ENCODE measurements at regions of chr3 and their contacts with region 1.

Region 1: DNA sequence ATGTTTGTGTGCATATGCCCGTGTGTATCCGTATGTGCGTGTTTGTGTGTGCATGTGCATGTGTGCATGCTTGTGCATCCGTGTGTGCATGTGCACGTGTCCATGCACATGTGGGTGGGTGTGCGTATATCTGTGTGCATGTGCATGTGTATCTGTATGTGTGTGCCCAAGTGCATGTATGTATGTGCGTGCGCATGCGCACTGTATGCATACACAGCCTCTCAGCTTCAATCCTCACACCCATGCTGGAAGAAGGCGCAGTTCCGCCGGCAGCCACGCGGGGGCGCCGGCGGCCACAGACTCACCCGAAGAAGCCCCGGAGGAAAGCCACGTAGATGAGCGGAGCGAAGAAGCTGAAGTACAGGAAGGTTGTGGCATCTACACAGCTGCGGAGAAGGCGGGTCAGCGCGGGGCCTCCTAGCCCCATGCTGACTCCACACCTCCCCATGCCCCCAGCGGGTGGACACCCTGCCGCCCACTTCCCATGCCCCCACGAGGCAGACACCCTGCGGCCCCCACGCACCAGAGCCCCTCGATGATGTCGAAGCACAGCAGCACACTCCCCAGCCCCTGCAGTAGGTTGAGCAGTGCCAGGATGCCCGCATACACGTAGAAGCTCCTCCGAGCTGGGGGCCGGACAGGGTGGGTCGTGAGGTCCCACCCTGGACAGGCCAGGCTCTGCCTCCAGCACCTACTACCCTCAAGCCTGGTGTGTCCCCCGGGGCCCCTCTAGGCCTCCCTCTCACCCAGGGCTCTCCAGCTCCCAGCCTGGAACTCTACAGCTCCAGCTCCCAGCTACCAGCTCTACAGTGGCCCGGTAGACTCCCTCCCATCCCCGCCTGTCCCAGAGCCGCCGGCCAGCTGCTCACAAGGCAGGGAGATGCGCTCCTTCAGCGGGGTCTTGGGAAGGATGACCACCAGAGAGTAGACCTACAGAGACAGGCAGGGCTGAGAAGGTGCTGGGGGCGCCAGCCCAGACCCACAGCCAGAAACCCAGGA is 15.4 kb downstream of the TPRA1 start:
- DNase-seq: peak; percentile 94
- H3K27ac ChIP-seq: peak overlapping the region; percentile 59
- CTCF ChIP-seq: peak; percentile 97

Region 2: DNA sequence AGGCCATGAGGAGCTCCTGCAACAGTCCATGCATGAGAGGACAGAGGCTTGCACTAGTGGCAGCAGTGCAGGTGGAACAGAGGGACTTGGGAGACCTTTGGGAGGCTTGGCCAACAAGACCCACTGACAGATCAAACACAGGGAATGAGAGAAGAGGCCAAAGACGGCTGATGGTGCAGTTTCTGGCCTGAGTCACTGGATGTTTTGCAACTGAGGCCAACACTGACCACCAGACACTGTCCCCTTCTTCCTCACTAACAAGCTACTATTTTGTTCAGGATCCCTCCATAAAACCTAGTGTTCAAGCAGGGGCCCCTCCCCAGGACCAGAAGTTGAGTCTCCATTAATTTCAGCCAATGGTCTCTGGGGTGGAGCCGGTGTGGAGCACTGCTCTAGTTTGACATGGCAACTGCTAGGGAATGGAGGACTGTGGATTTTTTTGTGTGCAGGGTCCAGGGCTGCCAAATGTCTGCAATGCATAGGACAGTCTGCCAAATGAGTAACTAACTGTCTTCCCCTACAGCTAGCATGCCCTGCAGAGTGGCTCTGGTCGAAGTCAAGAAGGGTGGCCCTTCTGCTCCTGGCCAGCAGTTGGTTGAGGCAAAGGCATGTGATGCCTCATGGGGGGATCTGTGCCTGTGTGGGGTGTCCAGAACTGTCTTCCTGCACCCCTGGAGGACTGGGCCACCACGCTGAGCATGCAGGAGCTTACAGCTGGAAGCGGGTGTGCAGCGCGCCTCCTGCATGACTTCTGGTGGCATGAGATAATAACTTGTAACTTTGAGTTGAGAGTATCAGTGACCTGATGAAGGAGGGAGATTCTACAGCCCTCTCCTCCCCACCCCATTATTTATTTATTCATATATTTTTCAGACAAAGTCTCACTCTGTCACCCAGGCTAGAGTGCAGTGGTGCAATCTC is 10.6 kb after region 1 on chr3:
- CTCF ChIA-PET with region 1: interaction called, 28 read pairs
- POLR2A ChIA-PET with region 1: interaction called, 4 read pairs
- DNase-seq: no peak
- H3K27ac ChIP-seq: peak overlapping the region; percentile 29; the same call in 1 of the 2 replicates
- CTCF ChIP-seq: no peak

Region 3: DNA sequence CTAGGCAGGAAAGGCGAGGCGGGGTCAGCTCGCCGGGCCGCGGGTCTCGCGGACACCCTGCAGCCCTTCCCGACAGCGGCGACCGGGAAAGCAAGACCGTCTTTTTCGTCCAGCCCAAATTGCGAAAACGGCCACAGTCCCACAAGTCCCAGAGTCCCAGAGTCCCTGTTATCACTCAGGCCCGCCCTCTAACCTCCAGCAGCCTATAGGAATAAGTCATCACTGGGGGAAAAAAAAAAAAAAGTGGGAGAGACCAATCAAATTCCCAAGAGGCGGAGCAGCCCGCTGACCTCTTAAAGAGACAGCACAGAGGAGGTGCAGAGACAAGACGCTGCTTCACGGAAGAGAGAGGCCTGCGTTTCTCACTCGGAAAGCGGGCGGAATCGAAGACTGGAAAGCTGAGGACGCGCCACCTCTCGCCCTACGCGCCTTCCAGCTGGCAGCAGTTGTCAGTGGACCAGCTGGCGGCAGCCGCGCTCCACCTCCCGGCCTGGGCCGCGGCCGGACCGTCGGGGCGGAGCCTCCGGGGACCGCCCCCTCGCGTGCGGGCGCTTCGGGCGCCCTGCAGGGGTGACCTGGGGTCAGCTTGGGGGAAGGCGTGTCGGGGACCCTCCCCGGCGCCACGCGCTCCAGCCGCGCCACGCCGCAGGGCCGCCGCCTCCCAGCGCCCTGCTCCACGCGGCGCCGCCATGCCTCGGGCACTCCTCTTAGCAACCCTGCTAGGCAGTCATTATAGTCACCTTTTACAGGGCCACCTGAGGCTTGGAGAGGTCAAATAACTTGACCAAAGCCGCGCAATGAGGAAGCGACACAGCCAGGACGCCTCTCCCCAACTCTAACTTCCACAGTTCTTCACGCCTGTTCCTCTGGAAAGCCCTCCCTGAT is 15.7 kb after region 1 on chr3 and contains the start of gene TPRA1:
- CTCF ChIA-PET with region 1: interaction called, 28 read pairs
- POLR2A ChIA-PET with region 1: interaction called, 4 read pairs
- DNase-seq: peak; percentile 97
- H3K27ac ChIP-seq: peak within 1 kb of the TSS; percentile 97
- CTCF ChIP-seq: peak; percentile 55

Region 4: GRCh38 chr3:127598841-127599570 is 23.8 kb after region 1 on chr3:
- CTCF ChIA-PET with region 1: interaction called, 10 read pairs
- POLR2A ChIA-PET with region 1: no interaction called
- DNase-seq: peak; percentile 30
- H3K27ac ChIP-seq: peak overlapping the region; percentile 80
- CTCF ChIP-seq: no peak

Region 5: DNA sequence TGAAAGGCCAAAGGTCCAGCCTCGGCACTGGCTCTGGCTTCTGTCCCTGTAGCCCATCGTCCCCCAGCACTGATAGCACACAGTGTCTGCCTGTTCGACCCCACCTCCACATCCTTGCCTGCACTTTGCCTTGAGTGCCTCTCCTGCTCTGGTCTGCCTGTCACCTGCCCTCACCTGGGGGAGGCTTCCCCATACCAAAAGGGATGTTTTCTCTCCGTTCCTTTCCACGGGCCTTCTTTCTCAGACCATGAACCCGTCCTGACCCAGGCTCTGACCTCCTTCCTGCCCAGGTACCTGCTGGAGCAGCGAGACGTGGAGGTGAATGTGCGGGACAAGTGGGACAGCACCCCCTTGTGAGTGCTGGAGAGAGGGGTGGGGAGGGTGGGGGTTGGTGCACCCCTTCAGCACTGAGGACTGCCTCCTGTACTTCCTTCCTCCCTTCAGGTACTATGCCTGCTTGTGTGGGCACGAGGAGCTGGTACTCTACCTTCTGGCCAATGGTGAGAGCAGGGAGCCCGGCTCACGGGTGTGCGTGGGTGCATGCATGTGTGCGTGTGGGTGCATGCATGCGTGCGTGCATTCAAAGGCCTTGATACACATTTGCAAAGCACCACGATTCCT is 99.0 kb after region 1 on chr3:
- CTCF ChIA-PET with region 1: no interaction called
- POLR2A ChIA-PET with region 1: no interaction called
- DNase-seq: no peak
- H3K27ac ChIP-seq: peak overlapping the region; percentile 83
- CTCF ChIP-seq: no peak

Region 6: DNA sequence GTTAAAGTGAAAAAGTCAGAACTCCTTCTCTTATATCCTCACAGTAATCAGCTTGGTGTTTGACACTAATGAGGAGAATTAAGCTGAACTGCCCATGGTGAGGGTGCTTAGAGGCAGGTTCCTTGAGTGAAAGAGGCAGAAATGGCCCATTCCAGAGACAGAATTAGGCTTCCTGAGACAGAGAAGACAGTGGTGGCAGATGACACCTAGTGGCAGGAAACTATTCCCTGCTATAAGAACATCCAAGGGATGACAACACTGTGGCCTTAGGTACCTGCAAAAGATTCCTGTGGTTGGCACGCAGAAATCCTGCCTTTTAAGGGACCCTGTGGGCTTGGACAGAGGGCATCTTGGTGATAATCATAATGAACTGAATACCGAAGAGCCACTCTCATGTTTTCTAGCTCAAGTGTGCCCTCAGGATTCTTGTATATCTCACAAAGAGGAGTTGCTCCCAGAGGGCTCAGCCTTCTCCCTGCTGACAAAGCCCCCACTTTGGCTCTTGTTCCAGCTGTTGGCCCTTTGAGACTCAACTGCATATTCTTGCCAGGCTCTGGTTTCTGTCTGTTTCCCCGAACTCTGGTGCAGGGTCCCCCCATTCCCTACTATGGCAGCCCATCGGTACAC is 395.9 kb after region 1 on chr3:
- CTCF ChIA-PET with region 1: interaction called, 11 read pairs
- POLR2A ChIA-PET with region 1: no interaction called
- DNase-seq: peak; percentile 55
- H3K27ac ChIP-seq: no peak overlapping the region
- CTCF ChIP-seq: peak; percentile 80

Measured in RWPE1 (cell line).